ENCODE measurements at regions of chr13 and their contacts with region 1.

Region 1: GRCh38 chr13:21476893-21477472 is 17.9 kb upstream of the ZDHHC20 start:
- DNase-seq: peak; percentile 73 to 97 (median 88)

Region 2: GRCh38 chr13:20940083-20940880 is 536.7 kb before region 1 on chr13:
- intact Hi-C with region 1: loop called (anchors 1 kb)
- DNase-seq: peak in 1 of 10 donors; percentile 5

Region 3: DNA sequence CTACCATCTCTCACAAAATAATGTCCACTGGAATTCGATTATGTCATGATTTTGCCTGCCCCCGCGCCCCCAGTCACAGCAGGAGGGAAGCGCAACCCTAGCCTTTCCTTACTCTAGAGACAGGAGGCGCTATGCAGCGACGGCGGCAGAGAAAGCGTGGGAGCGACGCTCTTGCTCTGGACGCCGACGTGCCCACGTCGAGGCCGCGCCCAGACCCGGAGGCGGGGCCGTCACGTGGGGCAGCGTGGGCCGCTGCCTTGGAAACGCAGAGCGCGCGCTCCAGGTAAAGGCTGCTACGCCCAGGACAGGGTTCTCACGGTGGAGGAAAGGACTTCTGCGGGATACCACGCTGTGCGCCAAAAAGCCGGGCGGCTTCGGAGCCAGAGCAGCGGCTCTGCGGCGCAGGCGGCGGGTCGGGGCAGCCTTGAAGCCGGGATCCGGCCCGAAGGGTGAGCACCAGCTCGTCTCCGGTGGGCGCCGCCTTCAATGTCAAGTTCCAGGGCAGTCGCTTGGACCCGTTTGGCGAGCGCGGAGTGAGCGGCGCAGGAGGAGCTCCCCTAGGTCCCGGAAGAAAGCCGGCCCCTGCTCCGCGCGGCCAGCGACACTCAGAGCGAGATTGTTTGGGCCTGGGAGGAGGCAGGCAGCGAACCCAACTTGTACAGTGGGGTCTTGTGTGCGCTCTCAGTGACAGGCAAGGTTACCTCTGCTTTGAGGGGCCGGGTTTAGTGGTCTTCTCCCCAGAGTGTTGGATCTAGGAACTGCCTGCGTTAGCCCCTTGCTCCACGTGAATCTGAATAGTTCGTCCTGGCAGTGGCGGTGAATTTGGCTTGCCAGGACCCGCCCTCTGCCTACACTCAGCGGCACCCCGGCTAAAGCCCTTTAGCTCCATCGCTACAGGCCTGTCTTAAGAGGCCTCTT is 178.8 kb before region 1 on chr13:
- intact Hi-C with region 1: loop called (anchors 1 kb)
- DNase-seq: peak; percentile 77 to 98 (median 83)

Region 4: DNA sequence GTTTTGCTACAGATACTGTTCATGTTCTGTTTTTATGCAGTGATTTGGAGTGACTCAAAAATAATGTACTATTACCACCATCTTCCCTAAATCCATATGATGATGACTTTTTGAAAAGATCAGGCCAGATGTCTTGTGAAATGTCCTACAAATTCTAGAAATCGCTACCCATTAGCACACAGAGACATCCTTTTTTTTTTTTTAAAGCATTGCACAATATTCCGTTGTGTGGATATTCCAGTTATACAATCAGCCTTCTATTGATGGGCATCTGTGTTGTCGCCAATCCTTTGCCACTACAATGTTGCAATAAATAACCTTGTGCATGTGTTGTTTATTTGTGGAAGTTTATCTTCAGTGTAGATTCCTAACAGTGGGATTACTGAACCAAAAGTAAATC is 42.4 kb before region 1 on chr13:
- intact Hi-C with region 1: loop called (anchors 1 kb)
- DNase-seq: peak in 1 of 10 donors; percentile 19

Region 5: DNA sequence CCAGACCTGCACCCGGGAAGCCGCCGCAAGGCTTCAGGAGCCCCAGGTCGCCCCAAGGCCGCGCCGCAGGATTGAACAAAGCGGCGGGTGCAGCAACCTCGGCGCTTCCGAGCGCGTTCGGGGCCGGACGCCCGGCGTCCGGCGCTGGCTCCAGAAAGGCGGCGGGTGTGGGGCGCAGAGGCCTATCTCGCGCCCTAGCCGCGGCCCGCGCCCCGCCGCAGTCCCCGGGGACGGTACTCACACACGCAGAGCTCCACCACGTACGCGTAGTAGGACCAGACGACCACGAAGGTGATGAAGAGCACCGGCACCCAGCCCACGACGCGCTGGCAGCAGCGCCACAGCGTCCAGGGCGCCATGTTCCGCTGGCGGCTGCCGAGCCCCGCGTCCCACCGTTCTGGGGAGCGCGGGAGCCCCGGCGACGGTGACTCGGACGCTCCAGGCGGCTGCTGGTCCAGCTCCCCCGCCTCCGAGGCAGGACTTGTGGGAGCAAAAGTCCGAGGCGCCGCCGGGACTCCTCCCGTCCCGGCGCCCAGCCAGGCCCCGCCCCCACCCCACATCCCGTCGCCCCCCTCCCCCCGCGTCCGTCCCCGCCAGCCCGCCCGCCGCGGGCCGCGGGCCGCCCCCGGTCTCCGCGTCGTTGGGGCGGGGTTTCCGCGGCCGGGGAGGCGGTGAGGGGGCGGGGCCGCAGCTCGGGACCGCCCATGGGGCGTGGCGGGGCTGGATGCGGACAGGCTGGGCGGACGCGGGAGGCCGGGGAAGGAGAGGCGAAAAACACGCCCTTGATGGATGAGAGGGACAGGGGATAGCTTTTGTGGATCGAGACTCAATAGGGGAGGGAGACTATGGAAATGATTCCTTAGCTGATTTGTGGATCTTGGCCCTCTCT is 17.9 kb before region 1 on chr13 and contains the start of gene ZDHHC20:
- intact Hi-C with region 1: loop called (anchors 2 kb)
- DNase-seq: peak; percentile 81 to 99 (median 92)

Region 6: DNA sequence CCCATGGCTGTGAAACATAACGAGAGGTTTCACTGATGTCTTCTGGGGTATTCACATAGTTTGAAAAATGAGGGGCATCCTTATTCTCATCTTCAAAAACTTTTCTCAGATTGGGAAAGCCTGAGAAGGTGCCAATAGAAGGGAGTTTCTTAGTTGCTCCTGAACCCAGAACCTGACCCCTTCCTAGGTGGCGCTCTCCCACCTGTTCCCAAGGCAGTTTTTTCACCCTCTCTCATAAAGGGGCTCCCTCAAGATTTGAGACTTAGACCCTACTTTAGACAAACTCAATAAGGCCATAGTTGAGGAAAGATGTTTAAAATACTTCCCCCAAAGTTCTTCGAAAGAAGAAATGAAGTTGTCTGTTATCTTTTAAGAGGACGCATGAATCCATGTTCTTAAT is 336.1 kb after region 1 on chr13:
- intact Hi-C with region 1: no loop called
- DNase-seq: no peak